Caco-2 (cell line): ENCODE measurements at regions of chr17 and their contacts with region 1.

Region 1: DNA sequence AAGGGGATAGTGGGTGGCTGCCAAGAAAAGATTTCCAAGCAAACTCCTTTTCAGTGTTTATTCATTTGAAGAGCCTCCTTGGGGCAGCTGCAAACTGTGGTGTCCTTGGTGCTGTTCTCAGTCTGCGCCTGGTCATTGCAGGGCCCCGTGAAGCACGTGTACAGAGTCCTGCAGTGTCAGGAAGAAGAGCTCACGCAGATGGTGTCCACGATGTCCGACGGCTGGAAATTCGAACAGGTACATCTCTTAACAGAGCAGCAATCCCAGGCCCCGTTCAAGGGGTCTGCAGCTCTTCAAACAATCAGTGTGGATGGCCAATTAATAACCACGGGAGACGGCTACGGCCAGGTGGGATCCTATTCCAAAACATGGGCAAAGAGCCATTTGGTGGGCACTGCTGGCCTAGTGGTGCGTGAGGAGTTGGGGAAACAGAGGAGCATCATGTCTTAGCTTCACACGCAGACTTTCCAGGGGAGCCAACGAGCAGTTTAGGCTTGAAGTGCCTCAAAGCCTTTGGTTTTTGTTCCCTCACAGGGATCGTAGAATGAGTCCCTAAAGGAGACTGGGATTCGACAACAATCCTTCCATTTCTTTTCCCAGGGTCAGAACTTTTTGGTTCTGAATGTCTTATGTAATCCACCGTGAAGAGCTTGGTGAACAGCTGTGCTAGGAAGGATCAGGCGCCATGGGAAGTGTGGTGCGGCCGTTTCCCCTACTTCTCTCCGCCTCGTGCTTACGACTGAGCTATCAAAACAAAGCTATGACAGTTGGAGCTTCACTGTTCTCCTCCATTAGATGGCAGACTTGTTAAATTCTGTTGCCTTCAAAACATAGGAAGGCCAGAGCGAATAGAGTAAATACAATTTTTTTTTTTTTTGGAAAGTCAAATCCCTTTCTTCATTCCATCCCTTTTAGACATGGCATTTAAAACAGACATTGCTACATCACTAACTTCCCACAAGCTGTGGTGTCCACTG is 12.6 kb downstream of the KCTD2 start:
- DNase-seq: peak in 1 of 2 experiments; percentile 49
- H3K4me3 ChIP-seq: no peak overlapping the region
- H3K4me3 Mint-ChIP-seq: no peak overlapping the region
- H3K27ac Mint-ChIP-seq: no peak overlapping the region
- H3K4me1 ChIP-seq: peaks cover 13% of the 10 kb centered on the region; the same call in 1 of the 2 replicates
- H3K4me1 Mint-ChIP-seq: peaks cover 9% of the 10 kb centered on the region
- H3K27me3 ChIP-seq: no peaks in the 10 kb centered on the region
- H3K27me3 Mint-ChIP-seq: no peaks in the 10 kb centered on the region
- CTCF ChIP-seq: peak; percentile 49 to 53

Region 2: GRCh38 chr17:75069783-75070182 is 10.1 kb after region 1 on chr17:
- CTCF ChIA-PET with region 1: interaction called, 16 read pairs
- POLR2A ChIA-PET with region 1: no interaction called
- intact Hi-C with region 1: no loop called
- DNase-seq: peak in 1 of 2 experiments; percentile 51
- H3K4me3 ChIP-seq: no peak overlapping the region
- H3K4me3 Mint-ChIP-seq: no peak overlapping the region
- H3K27ac Mint-ChIP-seq: no peak overlapping the region
- H3K4me1 ChIP-seq: no peaks in the 10 kb centered on the region
- H3K4me1 Mint-ChIP-seq: peaks cover 7% of the 10 kb centered on the region
- H3K27me3 ChIP-seq: no peaks in the 10 kb centered on the region
- H3K27me3 Mint-ChIP-seq: no peaks in the 10 kb centered on the region
- CTCF ChIP-seq: peak; percentile 16 to 34

Region 3: DNA sequence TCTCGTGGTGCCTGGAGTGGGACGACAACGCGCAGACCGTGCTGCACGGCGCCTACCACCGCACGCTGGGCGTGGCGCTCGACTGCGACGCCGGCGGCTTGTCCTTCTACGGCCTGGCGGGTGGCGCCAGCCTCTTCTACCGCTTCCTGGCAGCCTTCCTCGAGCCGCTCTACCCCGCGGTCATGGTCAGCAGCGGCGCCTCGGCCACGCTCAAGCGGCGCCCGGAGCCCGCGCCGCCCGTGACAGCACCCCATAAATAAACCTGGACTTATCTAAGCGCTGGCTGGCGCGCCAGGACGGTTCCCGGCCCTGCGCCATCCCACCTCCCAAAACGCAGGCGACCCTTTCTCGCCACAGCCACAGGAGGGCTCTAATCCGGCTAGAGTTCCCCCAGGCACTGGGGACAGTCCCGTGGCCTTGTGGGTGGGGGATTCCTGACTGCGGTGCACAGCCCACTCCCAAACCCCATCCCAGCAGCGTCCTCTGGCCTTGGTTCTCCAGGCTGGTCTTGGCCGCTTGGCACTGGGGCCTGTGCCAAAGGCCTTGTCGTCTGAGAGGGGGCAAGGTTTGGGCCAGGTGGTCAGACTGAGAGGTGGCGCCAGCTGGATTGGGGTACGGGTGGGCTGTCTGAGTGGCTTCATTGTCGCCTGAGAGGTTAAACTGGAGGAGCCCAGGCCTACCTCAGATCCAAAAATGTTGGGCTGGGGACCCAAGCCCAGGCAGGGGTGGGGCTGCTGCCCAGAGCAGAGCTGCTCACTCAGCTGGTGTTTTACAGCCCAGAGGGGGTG is 18.0 kb after region 1 on chr17:
- CTCF ChIA-PET with region 1: interaction called, 13 read pairs
- POLR2A ChIA-PET with region 1: interaction called, 8 read pairs
- intact Hi-C with region 1: no loop called
- DNase-seq: peak; percentile 77 to 79
- H3K4me3 ChIP-seq: peak overlapping the region; percentile 54
- H3K4me3 Mint-ChIP-seq: peak overlapping the region; percentile 95
- H3K27ac Mint-ChIP-seq: peak overlapping the region; percentile 93
- H3K4me1 ChIP-seq: peaks cover 32% of the 10 kb centered on the region
- H3K4me1 Mint-ChIP-seq: peaks cover 22% of the 10 kb centered on the region
- H3K27me3 ChIP-seq: no peaks in the 10 kb centered on the region
- H3K27me3 Mint-ChIP-seq: no peaks in the 10 kb centered on the region
- CTCF ChIP-seq: peak in 1 of 2 experiments; percentile 55

Region 4: DNA sequence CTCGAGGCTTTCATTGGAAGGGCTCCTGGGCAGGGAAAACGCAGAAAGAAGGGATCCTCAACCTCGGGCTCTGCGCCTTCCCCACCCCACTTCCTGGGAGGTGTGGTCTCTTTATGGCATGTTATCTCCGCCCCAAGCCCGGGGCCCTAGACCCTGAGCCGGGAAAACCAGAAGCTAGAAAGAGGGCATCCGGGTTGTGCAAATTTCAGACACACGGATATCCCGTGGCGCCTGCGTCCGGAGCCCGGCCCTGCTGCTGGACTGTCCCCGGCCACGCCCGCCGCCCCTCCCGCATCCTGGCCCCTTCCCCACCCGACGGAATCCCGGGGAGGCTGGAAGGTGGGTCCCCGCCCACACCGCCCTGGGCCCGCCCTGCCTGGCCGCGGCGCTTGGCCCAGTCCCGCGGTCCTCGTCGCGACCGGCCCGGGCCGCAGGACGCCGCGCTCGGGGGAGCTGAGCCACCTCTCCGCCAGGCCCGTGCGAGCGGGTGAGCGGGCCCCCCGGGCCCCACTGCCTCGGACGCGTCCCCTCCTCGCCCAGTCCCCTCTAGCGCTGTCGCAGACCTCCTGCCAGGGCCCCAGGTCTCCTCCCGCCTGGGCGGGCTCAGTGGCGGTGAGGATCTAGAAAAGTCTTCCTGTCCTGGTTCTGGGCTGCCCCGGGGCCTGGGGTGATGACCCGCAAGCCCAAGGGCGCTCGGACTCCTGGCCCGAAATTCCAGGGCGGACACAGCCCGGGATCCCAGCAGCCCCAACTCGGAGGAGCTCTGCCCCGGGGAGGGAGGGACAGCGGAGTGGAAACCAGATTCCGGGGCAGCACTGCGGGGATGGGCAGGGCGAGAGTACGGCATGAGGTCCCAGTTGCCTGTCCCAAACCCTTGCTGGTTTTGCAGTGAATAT is 28.1 kb after region 1 on chr17 and contains the start of gene SLC16A5:
- CTCF ChIA-PET with region 1: interaction called, 13 read pairs
- POLR2A ChIA-PET with region 1: interaction called, 4 read pairs
- intact Hi-C with region 1: no loop called
- DNase-seq: peak; percentile 99
- H3K4me3 ChIP-seq: peak within 1 kb of the TSS; percentile 74
- H3K4me3 Mint-ChIP-seq: peak within 1 kb of the TSS; percentile 92
- H3K27ac Mint-ChIP-seq: peak within 1 kb of the TSS; percentile 92
- H3K4me1 ChIP-seq: peaks cover 54% of the 10 kb centered on the region
- H3K4me1 Mint-ChIP-seq: peaks cover 57% of the 10 kb centered on the region
- H3K27me3 ChIP-seq: no peaks in the 10 kb centered on the region
- H3K27me3 Mint-ChIP-seq: no peaks in the 10 kb centered on the region
- CTCF ChIP-seq: no peak
- total RNA-seq, gene SLC16A5: 27.7 and 33.8 TPM in 2 replicates

Region 5: GRCh38 chr17:75131280-75132017 is 71.8 kb after region 1 on chr17 and contains the start of gene NT5C:
- CTCF ChIA-PET with region 1: interaction called, 20 read pairs
- POLR2A ChIA-PET with region 1: no interaction called
- intact Hi-C with region 1: loop called (anchors 1 kb)
- DNase-seq: peak; percentile 86 to 92
- H3K4me3 ChIP-seq: peak within 1 kb of the TSS; percentile 85
- H3K4me3 Mint-ChIP-seq: peak within 1 kb of the TSS; percentile 93
- H3K27ac Mint-ChIP-seq: peak within 1 kb of the TSS; percentile 91
- H3K4me1 ChIP-seq: peaks cover 19% of the 10 kb centered on the region
- H3K4me1 Mint-ChIP-seq: peaks cover 8% of the 10 kb centered on the region
- H3K27me3 ChIP-seq: no peaks in the 10 kb centered on the region
- H3K27me3 Mint-ChIP-seq: no peaks in the 10 kb centered on the region
- CTCF ChIP-seq: peak; percentile 68 to 86
- total RNA-seq, gene NT5C: 59.3 and 68.4 TPM in 2 replicates

Region 6: GRCh38 chr17:75205037-75205792 is 145.6 kb after region 1 on chr17 and contains the start of gene NUP85:
- CTCF ChIA-PET with region 1: interaction called, 20 read pairs
- POLR2A ChIA-PET with region 1: no interaction called
- intact Hi-C with region 1: no loop called
- DNase-seq: peak; percentile 98
- H3K4me3 ChIP-seq: peak within 1 kb of the TSS; percentile 92
- H3K4me3 Mint-ChIP-seq: peak within 1 kb of the TSS; percentile 87
- H3K27ac Mint-ChIP-seq: peak within 1 kb of the TSS; percentile 100
- H3K4me1 ChIP-seq: peaks cover 11% of the 10 kb centered on the region; the same call in 1 of the 2 replicates
- H3K4me1 Mint-ChIP-seq: peaks cover 6% of the 10 kb centered on the region
- H3K27me3 ChIP-seq: no peaks in the 10 kb centered on the region
- H3K27me3 Mint-ChIP-seq: no peaks in the 10 kb centered on the region
- CTCF ChIP-seq: no peak
- total RNA-seq, gene NUP85: 119 and 142 TPM in 2 replicates